Transverse colon (tissue), 4 donors: ENCODE measurements at regions of chr13 and their contacts with region 1.

Region 1: GRCh38 chr13:99203601-99204579 is 3.2 kb downstream of the UBAC2 start:
- DNase-seq: no peak
- H3K4me3 ChIP-seq: no peak overlapping the region
- H3K27ac ChIP-seq: no peak overlapping the region
- H3K4me1 ChIP-seq: peaks cover 0 to 34% (median 15%) of the 10 kb centered on the region in 4 donors
- H3K27me3 ChIP-seq: no peaks in the 10 kb centered on the region
- CTCF ChIP-seq: no peak
- EP300 ChIP-seq: no peak
- POLR2A ChIP-seq: no peak

Region 2: GRCh38 chr13:99158846-99159245 is 45.0 kb before region 1 on chr13:
- in situ Hi-C with region 1: no loop called
- intact Hi-C with region 1: loop called (anchors 2 kb)
- DNase-seq: no peak
- H3K4me3 ChIP-seq: no peak overlapping the region
- H3K27ac ChIP-seq: no peak overlapping the region
- H3K4me1 ChIP-seq: no peaks in the 10 kb centered on the region
- H3K27me3 ChIP-seq: peaks cover 22% of the 10 kb centered on the region
- CTCF ChIP-seq: no peak
- EP300 ChIP-seq: no peak
- POLR2A ChIP-seq: no peak